Activated CD4-positive, alpha-beta T cell treated with anti-CD3 and anti-CD28 coated beads for 36 hours (primary cell): ENCODE measurements at regions of chr14 and their contacts with region 1.

Region 1: DNA sequence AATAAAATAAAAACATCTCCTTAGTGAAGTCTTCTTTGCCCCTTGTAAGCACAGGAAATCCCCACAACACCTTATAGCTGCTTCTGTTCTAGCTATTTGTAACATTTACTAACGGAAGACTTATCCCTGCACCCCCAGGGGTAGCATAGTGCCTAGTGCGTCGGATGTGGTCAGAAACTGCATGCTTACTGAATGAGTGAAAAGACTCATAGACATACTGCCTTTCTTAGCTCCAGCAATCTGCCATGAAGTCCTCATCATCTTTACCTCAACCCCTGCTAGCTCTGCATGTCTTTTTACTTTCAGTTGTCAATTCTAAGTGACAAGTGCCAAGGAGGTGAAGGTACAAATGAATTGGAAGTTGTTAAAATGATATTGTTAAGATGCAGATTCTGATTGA is 12.9 kb downstream of the RIOX1 start:
- DNase-seq: no peak
- ATAC-seq: no peak
- H3K4me3 Mint-ChIP-seq: no peak overlapping the region
- H3K27ac Mint-ChIP-seq: no peak overlapping the region
- H3K4me1 Mint-ChIP-seq: no peaks in the 10 kb centered on the region
- H3K27me3 Mint-ChIP-seq: no peaks in the 10 kb centered on the region

Region 2: GRCh38 chr14:73136387-73137225 is 367.0 kb before region 1 on chr14 and contains the start of gene PSEN1:
- CTCF ChIA-PET with region 1: no interaction called
- POLR2A ChIA-PET with region 1: no interaction called
- intact Hi-C with region 1: no loop called
- DNase-seq: peak; percentile 99
- ATAC-seq: peak; percentile 95
- H3K4me3 Mint-ChIP-seq: peak within 1 kb of the TSS; percentile 86
- H3K27ac Mint-ChIP-seq: peak within 1 kb of the TSS; percentile 82
- H3K4me1 Mint-ChIP-seq: peaks cover 31% of the 10 kb centered on the region
- H3K27me3 Mint-ChIP-seq: no peaks in the 10 kb centered on the region
- total RNA-seq, gene PSEN1: 31.2 to 31.6 TPM

Region 3: GRCh38 chr14:73865536-73866113 is 362.0 kb after region 1 on chr14:
- CTCF ChIA-PET with region 1: no interaction called
- POLR2A ChIA-PET with region 1: no interaction called
- intact Hi-C with region 1: loop called in 1 of 2 experiments (anchors 5 kb)
- DNase-seq: no peak
- ATAC-seq: no peak
- H3K4me3 Mint-ChIP-seq: no peak overlapping the region
- H3K27ac Mint-ChIP-seq: no peak overlapping the region
- H3K4me1 Mint-ChIP-seq: no peaks in the 10 kb centered on the region
- H3K27me3 Mint-ChIP-seq: no peaks in the 10 kb centered on the region

Region 4: GRCh38 chr14:74038015-74038859 is 534.6 kb after region 1 on chr14:
- CTCF ChIA-PET with region 1: no interaction called
- POLR2A ChIA-PET with region 1: no interaction called
- intact Hi-C with region 1: loop called in 1 of 2 experiments (anchors 5 kb)
- DNase-seq: no peak
- ATAC-seq: peak; percentile 51
- H3K4me3 Mint-ChIP-seq: no peak overlapping the region
- H3K27ac Mint-ChIP-seq: no peak overlapping the region
- H3K4me1 Mint-ChIP-seq: no peaks in the 10 kb centered on the region
- H3K27me3 Mint-ChIP-seq: no peaks in the 10 kb centered on the region